Panc1 (cell line): ENCODE measurements at regions of chr1 and their contacts with region 1.

Region 1: DNA sequence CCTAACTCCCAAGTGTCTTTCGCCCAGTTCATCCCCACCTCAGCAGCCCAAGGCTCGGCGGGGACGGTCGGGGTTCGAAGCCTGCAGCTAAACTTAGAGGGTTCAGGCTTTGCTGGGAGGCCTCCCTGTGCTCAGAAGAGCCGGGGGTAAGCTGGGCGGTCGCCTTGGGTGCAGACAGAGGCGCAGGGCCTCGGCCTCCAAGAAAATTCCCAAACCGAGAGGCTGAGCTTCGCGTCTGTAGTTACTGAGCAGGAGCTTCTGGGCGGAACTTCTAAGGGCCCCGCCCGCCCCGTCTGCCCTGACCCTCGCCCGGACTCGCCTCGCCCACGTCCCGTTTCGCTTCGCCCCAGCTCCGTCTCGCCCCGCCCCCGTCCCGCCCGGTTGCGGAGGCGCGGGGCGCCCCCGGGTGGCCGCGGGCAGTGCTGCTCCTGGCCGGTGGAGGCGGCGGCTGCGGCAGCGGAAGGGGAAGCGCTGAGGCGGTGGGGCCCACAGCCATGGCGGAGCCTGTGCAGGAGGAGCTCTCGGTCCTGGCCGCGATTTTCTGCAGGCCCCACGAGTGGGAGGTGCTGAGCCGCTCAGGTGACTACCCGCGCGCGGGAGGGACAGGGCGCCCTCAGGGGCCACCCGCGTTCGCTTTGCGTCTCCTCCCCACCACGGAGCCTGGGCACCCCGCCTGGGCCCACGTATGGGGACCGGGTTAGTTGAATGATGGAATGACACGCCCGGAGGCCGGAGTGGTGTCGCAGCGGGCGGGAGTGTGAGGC is at the start of gene RWDD3:
- DNase-seq: peak; percentile 27
- ATAC-seq: peak; percentile 97
- H3K4me3 ChIP-seq: peak within 1 kb of the TSS; percentile 68 to 72
- H3K27ac ChIP-seq: peak within 1 kb of the TSS; percentile 66; the same call in 1 of the 2 replicates
- H3K4me1 ChIP-seq: peaks cover 7% of the 10 kb centered on the region
- H3K27me3 ChIP-seq: no peaks in the 10 kb centered on the region
- CTCF ChIP-seq: peak; percentile 92
- total RNA-seq, gene RWDD3: 6.1 TPM

Region 2: GRCh38 chr1:95116580-95117206 is 117.2 kb before region 1 on chr1:
- CTCF ChIA-PET with region 1: interaction called, 7 read pairs
- POLR2A ChIA-PET with region 1: no interaction called
- in situ Hi-C with region 1: no loop called
- intact Hi-C with region 1: loop called (anchors 10 kb)
- DNase-seq: peak; percentile 20
- ATAC-seq: peak; percentile 86
- H3K4me3 ChIP-seq: peak overlapping the region; percentile 57 to 68
- H3K27ac ChIP-seq: no peak overlapping the region
- H3K4me1 ChIP-seq: no peaks in the 10 kb centered on the region
- H3K27me3 ChIP-seq: peaks cover 13% of the 10 kb centered on the region
- CTCF ChIP-seq: peak; percentile 71

Region 3: DNA sequence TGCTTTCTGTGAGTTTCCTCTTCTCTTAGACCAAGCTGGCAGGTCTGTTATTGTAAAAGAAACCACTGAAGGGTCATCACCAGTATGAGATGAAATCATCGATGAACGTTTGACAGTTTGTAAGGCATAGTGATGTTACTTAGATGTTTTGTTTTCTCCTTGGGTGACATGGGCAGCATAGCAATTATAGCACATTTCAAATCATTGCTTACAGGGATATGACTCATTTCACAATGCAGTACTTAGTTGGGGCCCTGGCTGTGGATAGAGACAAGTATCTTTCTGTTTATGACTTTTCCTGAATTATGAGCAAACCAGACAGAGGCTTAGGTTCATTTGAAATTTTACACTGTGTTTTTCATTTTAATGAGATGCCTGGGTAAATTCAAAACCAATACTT is 313.1 kb after region 1 on chr1:
- CTCF ChIA-PET with region 1: no interaction called
- POLR2A ChIA-PET with region 1: no interaction called
- in situ Hi-C with region 1: no loop called
- intact Hi-C with region 1: no loop called
- DNase-seq: no peak
- ATAC-seq: no peak
- H3K4me3 ChIP-seq: no peak overlapping the region
- H3K27ac ChIP-seq: no peak overlapping the region
- H3K4me1 ChIP-seq: no peaks in the 10 kb centered on the region
- H3K27me3 ChIP-seq: no peaks in the 10 kb centered on the region; the same call in 1 of the 2 replicates
- CTCF ChIP-seq: no peak